Posterior cingulate gyrus (tissue), 11 donors: ENCODE measurements at regions of chr7 and their contacts with region 1.

Region 1: DNA sequence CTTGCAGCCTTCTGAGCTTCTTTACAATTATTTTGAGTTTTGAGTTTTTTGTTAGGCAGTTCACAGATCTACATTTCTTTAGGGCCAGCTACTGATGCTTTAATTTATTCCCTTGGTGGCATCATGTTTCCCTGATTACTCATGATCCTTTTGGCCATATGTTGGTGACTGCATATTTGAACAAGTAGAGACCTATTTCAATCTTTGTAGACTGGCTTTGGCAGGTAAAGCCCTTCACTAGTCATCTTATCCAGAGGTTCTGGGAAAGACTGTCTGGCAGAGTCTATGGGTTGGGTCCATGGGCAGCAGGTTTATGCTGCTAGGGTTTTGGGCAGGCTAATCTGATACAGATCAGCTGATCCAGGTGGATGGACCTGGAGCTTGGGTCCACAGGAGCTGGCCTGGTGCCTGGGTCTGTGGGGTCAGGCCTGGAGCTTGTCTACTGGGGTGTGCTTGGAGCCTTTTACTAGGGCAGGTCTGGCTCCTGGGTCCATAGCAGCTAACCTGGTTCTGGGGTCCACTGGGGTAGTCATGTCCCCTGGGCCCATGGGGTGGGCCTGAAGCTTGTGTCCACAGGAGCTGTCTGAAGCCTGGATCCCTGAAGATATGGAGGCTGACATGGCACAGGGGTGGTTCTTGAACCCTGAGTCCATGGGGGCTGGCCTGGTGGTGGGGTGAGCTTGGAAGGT is 72.7 kb downstream of the GPR85 start:
- DNase-seq: peak in 3 of 10 donors; percentile 49 to 70 (median 57)

Region 2: GRCh38 chr7:113698556-113699220 is 684.8 kb after region 1 on chr7:
- intact Hi-C with region 1: loop called (anchors 5 kb)
- DNase-seq: no peak